Ascending aorta (tissue), 2 donors: ENCODE measurements at regions of chr2 and their contacts with region 1.

Region 1: DNA sequence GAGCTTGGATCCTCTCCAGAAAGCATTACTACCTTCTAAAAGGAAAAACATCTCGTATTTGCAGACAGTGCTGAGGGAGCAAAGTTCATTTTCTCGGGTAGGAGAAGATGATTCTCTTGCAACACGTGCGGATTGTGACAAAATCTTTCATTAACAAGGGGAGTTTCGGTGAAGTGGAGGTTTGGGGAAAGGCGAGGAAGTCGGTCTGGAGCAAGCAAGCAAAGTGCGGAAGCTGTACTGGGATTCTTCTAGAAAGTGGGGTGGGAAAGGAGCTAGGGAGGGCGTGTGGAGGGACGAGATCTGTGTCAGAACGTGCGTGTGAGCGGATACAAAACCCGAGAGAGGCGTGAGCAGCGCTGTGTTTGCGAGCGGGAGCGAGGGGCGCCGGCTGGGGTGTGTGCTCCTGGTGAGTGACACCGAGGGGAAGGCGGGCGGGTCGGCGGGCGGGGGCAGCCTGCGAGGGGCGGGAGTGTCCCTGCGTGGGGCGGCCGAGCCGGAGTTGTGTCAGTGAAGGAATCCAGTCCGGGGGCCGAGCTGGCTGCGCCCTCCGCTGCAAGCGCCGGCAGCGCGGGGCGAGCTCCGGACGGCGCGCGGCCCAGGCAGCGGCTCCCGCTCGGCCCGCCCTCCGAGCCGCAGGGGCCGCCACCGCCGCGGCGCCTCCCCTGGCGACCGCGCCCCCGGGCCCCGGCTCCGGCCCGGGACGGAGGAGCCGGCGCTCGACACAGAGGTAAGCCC is at the start of gene SPATS2L:
- DNase-seq: peak; percentile 26 to 86
- H3K4me3 ChIP-seq: peak within 1 kb of the TSS; percentile 77 to 87
- H3K27ac ChIP-seq: peak within 1 kb of the TSS; percentile 86 to 91
- H3K4me1 ChIP-seq: peaks cover 0 to 7% of the 10 kb centered on the region in 2 donors
- H3K27me3 ChIP-seq: no peaks in the 10 kb centered on the region
- CTCF ChIP-seq: no peak
- total RNA-seq, gene SPATS2L: 36.6 TPM

Region 2: GRCh38 chr2:200172944-200173581 is 133.3 kb before region 1 on chr2:
- intact Hi-C with region 1: no loop called
- DNase-seq: no peak
- H3K4me3 ChIP-seq: no peak overlapping the region
- H3K27ac ChIP-seq: no peak overlapping the region
- H3K4me1 ChIP-seq: no peaks in the 10 kb centered on the region
- H3K27me3 ChIP-seq: no peaks in the 10 kb centered on the region
- CTCF ChIP-seq: no peak

Region 3: DNA sequence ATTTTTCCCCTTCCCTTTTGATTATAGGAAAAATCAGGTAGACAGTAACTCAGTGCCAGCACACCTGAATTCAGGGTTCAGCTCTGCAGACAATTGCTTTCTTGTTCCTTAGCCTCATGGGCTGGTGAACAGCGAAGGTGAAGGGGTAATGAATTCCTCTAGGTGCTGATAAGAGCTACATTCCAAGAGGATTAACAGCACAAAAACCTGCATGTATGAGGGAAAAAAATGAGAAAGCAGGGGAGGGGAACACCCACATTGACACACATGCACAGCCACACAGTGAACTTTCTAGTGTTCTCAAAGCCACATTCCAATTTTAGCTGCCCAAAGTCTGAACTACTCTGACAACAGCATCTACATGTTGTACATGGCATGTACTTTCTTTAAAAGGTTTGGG is 46.3 kb after region 1 on chr2:
- intact Hi-C with region 1: loop called (anchors 2 kb)
- DNase-seq: no peak
- H3K4me3 ChIP-seq: peak overlapping the region in 1 of 2 donors; percentile 25
- H3K27ac ChIP-seq: peak overlapping the region; percentile 79 to 80
- H3K4me1 ChIP-seq: peaks cover 6 to 27% of the 10 kb centered on the region in 2 donors
- H3K27me3 ChIP-seq: no peaks in the 10 kb centered on the region
- CTCF ChIP-seq: no peak

Region 4: GRCh38 chr2:200378652-200379290 is 72.4 kb after region 1 on chr2:
- intact Hi-C with region 1: loop called (anchors 2 kb)
- DNase-seq: no peak
- H3K4me3 ChIP-seq: peak overlapping the region in 1 of 2 donors; percentile 33
- H3K27ac ChIP-seq: peak overlapping the region; percentile 73 to 81
- H3K4me1 ChIP-seq: peaks cover 0 to 50% of the 10 kb centered on the region in 2 donors
- H3K27me3 ChIP-seq: no peaks in the 10 kb centered on the region
- CTCF ChIP-seq: no peak

Region 5: DNA sequence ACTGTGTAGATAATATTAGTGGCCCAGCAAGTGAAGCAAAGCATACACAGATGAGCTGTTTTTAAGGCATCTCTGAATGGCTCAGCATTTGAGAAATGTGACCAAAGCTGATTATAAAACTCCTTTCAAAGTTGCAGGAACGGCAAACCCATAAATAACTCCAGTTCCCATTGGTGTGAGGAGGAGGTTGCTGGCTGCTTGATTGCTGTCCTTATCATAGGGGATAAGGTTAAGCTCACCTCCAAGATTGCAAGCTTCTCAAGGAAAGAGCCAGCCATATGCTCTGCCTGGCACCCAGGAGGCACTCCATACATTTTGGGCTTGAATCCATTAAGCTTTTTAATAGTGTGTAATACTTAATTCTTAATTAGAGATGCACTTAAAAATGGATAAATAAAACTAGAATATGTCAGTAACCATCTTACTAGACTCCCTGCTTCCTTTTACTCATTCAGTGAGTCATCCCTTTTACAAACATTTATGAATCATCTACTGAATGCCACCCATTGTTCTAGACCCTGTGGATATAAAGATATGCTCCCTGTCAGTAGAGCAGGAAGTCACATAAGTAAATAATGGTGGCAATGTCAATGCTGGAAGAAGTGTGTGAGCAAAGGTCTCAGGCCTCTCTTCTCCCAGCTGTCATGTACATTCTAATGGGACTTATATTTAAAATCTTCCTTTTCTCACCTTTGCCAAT is 99.4 kb after region 1 on chr2:
- intact Hi-C with region 1: loop called (anchors 2 kb)
- DNase-seq: no peak
- H3K4me3 ChIP-seq: no peak overlapping the region
- H3K27ac ChIP-seq: peak overlapping the region; percentile 64 to 68
- H3K4me1 ChIP-seq: peaks cover 0 to 22% of the 10 kb centered on the region in 2 donors
- H3K27me3 ChIP-seq: no peaks in the 10 kb centered on the region
- CTCF ChIP-seq: no peak

Region 6: DNA sequence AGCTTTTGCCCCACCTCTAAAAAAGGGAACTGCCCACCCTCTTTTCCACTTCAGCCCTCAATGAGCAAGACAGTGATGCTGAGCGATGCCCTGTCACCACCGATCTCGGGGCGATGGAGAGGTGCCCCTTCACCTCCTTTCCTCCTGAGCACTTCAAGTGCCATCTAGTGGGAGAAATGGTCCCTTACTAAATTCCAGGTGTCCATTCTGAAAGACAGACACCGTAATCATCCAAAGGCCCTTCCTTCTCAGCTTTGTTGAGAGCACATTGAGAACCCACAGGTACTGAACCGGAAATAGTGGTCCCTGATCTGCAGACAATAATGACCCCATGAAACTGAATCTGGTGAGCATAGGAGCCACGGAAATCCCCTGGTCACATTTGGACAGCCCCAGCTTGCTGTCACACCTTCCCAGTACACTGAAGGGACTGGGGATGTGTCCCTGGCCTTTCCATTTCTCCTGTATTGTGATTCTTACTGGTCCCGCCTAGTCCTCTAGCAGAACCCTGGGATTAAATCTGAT is 165.0 kb after region 1 on chr2:
- intact Hi-C with region 1: loop called (anchors 5 kb)
- DNase-seq: no peak
- H3K4me3 ChIP-seq: no peak overlapping the region
- H3K27ac ChIP-seq: no peak overlapping the region
- H3K4me1 ChIP-seq: no peaks in the 10 kb centered on the region
- H3K27me3 ChIP-seq: no peaks in the 10 kb centered on the region
- CTCF ChIP-seq: peak in 1 of 3 experiments; percentile 53